ENCODE measurements at regions of chr6 and their contacts with region 1.

Region 1: DNA sequence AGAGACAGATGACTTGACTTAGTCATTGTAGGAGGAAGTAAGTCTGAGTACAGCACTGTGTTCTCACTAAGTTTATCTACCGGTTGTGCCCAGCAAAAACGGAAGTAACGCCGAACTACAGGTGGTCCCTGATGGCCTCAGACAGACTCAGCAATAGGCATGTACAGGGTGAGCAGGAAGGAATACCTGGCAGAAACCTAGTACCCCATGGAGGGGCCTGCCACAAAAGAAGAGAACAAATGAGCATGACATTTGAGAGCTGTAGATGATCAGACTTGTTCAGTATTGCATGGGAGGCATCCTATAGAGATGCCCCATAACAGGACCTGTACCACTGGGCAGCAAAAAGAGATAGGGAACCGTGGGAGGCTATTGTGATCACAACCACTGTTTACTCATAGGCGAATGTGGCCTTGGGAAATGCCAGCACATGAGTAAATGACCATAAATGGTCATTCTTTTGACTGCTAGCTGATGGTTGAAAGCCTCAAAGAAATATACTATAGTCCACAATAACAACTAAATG is 106.4 kb upstream of the TAB2 start:
- DNase-seq: no peak
- H3K4me3 Mint-ChIP-seq: peak overlapping the region; percentile 45
- H3K27ac Mint-ChIP-seq: no peak overlapping the region
- H3K4me1 Mint-ChIP-seq: peaks cover 10% of the 10 kb centered on the region
- H3K27me3 Mint-ChIP-seq: no peaks in the 10 kb centered on the region

Region 2: GRCh38 chr6:148760568-148761526 is 450.3 kb before region 1 on chr6:
- intact Hi-C with region 1: loop called (anchors 10 kb)
- DNase-seq: peak; percentile 40
- H3K4me3 Mint-ChIP-seq: peak overlapping the region; percentile 73
- H3K27ac Mint-ChIP-seq: peak overlapping the region; percentile 81
- H3K4me1 Mint-ChIP-seq: peaks cover 53% of the 10 kb centered on the region
- H3K27me3 Mint-ChIP-seq: peaks cover 53% of the 10 kb centered on the region

Region 3: DNA sequence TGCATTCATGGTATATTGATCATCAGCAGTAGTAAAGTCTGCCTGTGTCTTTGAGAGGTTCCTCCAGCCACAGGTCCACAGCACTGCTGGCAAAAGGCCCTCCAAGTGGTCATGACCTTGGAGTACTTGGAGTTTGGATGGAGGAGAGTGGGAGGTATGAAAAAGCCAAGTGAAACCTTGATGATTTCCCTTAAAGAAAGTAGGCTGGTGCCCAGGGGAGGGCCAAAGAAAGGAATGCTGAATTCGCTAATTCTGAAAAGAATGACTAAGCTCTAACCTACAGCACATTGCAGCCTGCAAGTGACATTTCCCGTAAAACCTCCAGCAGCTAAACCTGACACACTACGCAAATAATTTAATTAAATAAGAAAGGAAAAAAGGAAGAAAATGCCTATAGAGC is 117.0 kb before region 1 on chr6:
- intact Hi-C with region 1: loop called (anchors 1 kb)
- DNase-seq: no peak
- H3K4me3 Mint-ChIP-seq: peak overlapping the region; percentile 50
- H3K27ac Mint-ChIP-seq: peak overlapping the region; percentile 84
- H3K4me1 Mint-ChIP-seq: peaks cover 63% of the 10 kb centered on the region
- H3K27me3 Mint-ChIP-seq: no peaks in the 10 kb centered on the region

Region 4: GRCh38 chr6:149235130-149235561 is 24.0 kb after region 1 on chr6:
- intact Hi-C with region 1: loop called (anchors 1 kb)
- DNase-seq: no peak
- H3K4me3 Mint-ChIP-seq: no peak overlapping the region
- H3K27ac Mint-ChIP-seq: peak overlapping the region; percentile 99
- H3K4me1 Mint-ChIP-seq: peaks cover 60% of the 10 kb centered on the region
- H3K27me3 Mint-ChIP-seq: no peaks in the 10 kb centered on the region

Region 5: DNA sequence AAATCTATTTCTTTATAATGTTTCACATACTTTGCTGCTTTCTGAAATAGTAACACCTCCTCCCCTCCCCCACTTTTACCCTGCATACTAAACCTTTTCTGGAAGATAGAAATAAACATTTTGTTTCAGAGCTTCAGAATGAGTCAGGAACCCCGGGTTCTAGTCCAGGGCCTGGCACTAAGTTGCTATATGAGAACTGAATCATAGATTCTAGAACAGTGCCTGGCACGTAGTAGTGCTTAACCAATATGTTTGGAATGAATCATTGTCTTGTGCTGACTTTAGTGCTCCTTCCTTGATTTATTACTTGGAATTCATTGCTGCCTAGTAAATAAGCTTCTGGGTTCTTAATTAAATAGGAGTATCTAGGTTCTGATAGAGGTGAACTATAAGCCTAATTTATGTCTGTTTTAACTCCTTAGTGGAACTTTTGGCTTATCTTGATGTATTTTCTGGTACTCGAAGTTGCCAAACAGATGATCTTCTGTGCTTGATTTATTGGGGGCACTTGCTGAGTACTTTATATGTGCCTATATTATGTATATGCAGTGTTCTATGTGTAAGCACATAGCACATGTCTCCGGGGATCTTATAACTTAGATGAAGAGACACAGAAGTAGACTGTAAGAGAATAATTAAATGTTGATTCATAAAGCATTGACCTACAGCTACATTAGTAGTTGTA is 125.0 kb after region 1 on chr6:
- intact Hi-C with region 1: loop called (anchors 2 kb)
- DNase-seq: no peak
- H3K4me3 Mint-ChIP-seq: peak overlapping the region; percentile 45
- H3K27ac Mint-ChIP-seq: peak overlapping the region; percentile 88
- H3K4me1 Mint-ChIP-seq: peaks cover 80% of the 10 kb centered on the region
- H3K27me3 Mint-ChIP-seq: no peaks in the 10 kb centered on the region

Region 6: DNA sequence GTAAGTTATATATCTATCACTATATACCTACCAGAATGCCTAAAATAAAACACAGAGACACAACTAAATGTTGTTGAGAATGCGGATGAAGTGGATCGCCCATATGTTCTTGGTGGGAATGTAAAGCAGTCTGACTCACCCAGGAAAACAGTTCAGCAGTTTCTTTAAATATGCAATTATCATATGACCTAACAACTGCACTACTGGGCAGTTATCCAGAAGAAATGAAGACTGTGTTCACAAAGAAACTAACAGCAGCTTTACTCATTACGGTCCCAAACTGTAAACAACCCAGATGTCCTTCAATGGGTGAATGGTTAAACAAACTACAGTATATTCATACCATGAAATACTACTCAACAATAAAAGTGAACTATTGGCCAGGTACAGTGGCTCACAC is 288.0 kb after region 1 on chr6:
- intact Hi-C with region 1: loop called (anchors 5 kb)
- DNase-seq: no peak
- H3K4me3 Mint-ChIP-seq: no peak overlapping the region
- H3K27ac Mint-ChIP-seq: peak overlapping the region; percentile 33
- H3K4me1 Mint-ChIP-seq: peaks cover 48% of the 10 kb centered on the region
- H3K27me3 Mint-ChIP-seq: no peaks in the 10 kb centered on the region

Measured in activated T-helper 2 cell treated with anti-CD3 and anti-CD28 coated beads, Interferon-gamma antibody, Interleukin-2, Interleukin-4, amounts not matched to agents 10 μg/mL and 5 μg/mL and 100 μg/mL, durations not matched to agents 14 hours and 24 hours and 36 hours (primary cell).